CD8-positive, alpha-beta T cell (primary cell): ENCODE measurements at regions of chr1 and their contacts with region 1.

Region 1: GRCh38 chr1:117758444-117759316 is 152.8 kb downstream of the TENT5C start:
- DNase-seq: peak; percentile 38 to 81 (median 69)
- ATAC-seq: peak; percentile 87
- H3K4me3 ChIP-seq: peak overlapping the region; percentile 45 to 48
- H3K4me3 Mint-ChIP-seq: peak overlapping the region; percentile 79
- H3K27ac ChIP-seq: no peak overlapping the region
- H3K27ac Mint-ChIP-seq: no peak overlapping the region
- H3K4me1 ChIP-seq: no peaks in the 10 kb centered on the region
- H3K4me1 Mint-ChIP-seq: peaks cover 5% of the 10 kb centered on the region
- H3K27me3 ChIP-seq: no peaks in the 10 kb centered on the region
- H3K27me3 Mint-ChIP-seq: peaks cover 10% of the 10 kb centered on the region
- CTCF ChIP-seq: peak; percentile 86

Region 2: GRCh38 chr1:117121776-117122697 is 636.6 kb before region 1 on chr1:
- CTCF ChIA-PET with region 1: interaction called, 5 read pairs
- POLR2A ChIA-PET with region 1: no interaction called
- intact Hi-C with region 1: loop called in 1 of 2 experiments (anchors 10 kb)
- DNase-seq: peak; percentile 67 to 89 (median 81)
- ATAC-seq: peak; percentile 84
- H3K4me3 ChIP-seq: peak overlapping the region; percentile 56 to 91
- H3K4me3 Mint-ChIP-seq: peak overlapping the region; percentile 84
- H3K27ac ChIP-seq: no peak overlapping the region
- H3K27ac Mint-ChIP-seq: no peak overlapping the region
- H3K4me1 ChIP-seq: peaks cover 10% of the 10 kb centered on the region
- H3K4me1 Mint-ChIP-seq: peaks cover 9% of the 10 kb centered on the region
- H3K27me3 ChIP-seq: peaks cover 0 to 2% of the 10 kb centered on the region in 2 experiments
- H3K27me3 Mint-ChIP-seq: peaks cover 11% of the 10 kb centered on the region
- CTCF ChIP-seq: peak; percentile 69

Region 3: DNA sequence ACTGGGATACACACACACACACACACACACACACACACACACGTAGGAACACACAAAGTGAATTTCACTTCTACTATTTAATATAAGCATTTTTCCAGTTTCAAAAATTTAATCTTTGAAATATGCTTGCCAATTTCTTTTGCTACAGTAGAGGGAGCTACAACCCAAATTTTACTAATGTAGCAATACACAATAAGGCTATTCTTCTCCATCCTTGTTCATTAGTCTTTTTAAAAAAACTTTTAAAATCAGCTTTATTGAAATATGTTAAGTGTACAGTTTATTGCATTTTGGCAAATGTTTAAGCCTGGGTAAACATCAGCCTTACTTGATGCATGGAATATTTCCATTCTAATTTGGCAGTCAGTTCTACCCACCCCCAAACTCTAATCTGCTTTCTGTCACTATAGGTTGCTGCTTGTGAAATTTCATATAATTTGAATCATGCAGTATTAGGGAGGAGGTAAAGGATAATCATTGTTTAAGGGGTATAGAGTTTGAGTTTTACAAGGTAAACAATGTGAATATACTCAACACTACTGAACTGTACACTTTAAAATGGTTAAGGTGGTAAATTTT is 245.8 kb before region 1 on chr1:
- CTCF ChIA-PET with region 1: interaction called, 148 read pairs
- POLR2A ChIA-PET with region 1: no interaction called
- intact Hi-C with region 1: loop called (anchors 1 kb)
- DNase-seq: peak in 2 of 9 experiments; percentile 35 to 46
- ATAC-seq: peak; percentile 46
- H3K4me3 ChIP-seq: no peak overlapping the region
- H3K4me3 Mint-ChIP-seq: no peak overlapping the region
- H3K27ac ChIP-seq: no peak overlapping the region
- H3K27ac Mint-ChIP-seq: no peak overlapping the region
- H3K4me1 ChIP-seq: no peaks in the 10 kb centered on the region
- H3K4me1 Mint-ChIP-seq: no peaks in the 10 kb centered on the region
- H3K27me3 ChIP-seq: no peaks in the 10 kb centered on the region
- H3K27me3 Mint-ChIP-seq: no peaks in the 10 kb centered on the region
- CTCF ChIP-seq: peak; percentile 80

Region 4: DNA sequence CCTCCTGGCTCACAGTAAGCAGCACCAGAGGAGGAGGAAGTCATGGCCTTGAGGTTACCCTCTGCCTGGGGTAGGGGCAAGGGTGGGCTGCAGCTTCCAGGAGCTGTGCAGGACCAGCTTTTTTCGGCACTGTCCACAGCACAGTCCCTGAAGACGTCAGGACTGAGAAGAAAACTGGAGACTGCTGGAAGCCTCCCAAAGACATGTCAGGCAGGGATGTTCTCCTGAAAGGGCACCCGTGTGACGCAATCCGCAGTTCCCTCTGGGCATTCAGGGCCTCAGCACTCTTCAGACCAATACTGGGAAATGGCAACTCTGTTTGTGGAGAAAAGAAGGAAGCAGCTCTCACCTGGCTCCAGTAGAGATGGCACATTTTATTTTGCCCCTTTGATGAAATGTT is 217.7 kb before region 1 on chr1:
- CTCF ChIA-PET with region 1: interaction called, 214 read pairs
- POLR2A ChIA-PET with region 1: no interaction called
- intact Hi-C with region 1: no loop called
- DNase-seq: no peak
- ATAC-seq: no peak
- H3K4me3 ChIP-seq: no peak overlapping the region
- H3K4me3 Mint-ChIP-seq: no peak overlapping the region
- H3K27ac ChIP-seq: no peak overlapping the region
- H3K27ac Mint-ChIP-seq: no peak overlapping the region
- H3K4me1 ChIP-seq: peaks cover 13% of the 10 kb centered on the region
- H3K4me1 Mint-ChIP-seq: no peaks in the 10 kb centered on the region
- H3K27me3 ChIP-seq: no peaks in the 10 kb centered on the region
- H3K27me3 Mint-ChIP-seq: no peaks in the 10 kb centered on the region
- CTCF ChIP-seq: no peak

Region 5: GRCh38 chr1:117710710-117711109 is 48.0 kb before region 1 on chr1:
- CTCF ChIA-PET with region 1: interaction called, 15 read pairs
- POLR2A ChIA-PET with region 1: no interaction called
- intact Hi-C with region 1: loop called in 1 of 2 experiments (anchors 5 kb)
- DNase-seq: peak in 1 of 9 experiments; percentile 18
- ATAC-seq: no peak
- H3K4me3 ChIP-seq: no peak overlapping the region
- H3K4me3 Mint-ChIP-seq: no peak overlapping the region
- H3K27ac ChIP-seq: no peak overlapping the region
- H3K27ac Mint-ChIP-seq: no peak overlapping the region
- H3K4me1 ChIP-seq: no peaks in the 10 kb centered on the region
- H3K4me1 Mint-ChIP-seq: no peaks in the 10 kb centered on the region
- H3K27me3 ChIP-seq: peaks cover 0 to 2% of the 10 kb centered on the region in 2 experiments
- H3K27me3 Mint-ChIP-seq: peaks cover 33% of the 10 kb centered on the region
- CTCF ChIP-seq: no peak

Region 6: GRCh38 chr1:117770981-117771531 is 12.4 kb after region 1 on chr1:
- CTCF ChIA-PET with region 1: interaction called, 29 read pairs
- POLR2A ChIA-PET with region 1: no interaction called
- intact Hi-C with region 1: no loop called
- DNase-seq: no peak
- ATAC-seq: no peak
- H3K4me3 ChIP-seq: no peak overlapping the region
- H3K4me3 Mint-ChIP-seq: no peak overlapping the region
- H3K27ac ChIP-seq: no peak overlapping the region
- H3K27ac Mint-ChIP-seq: no peak overlapping the region
- H3K4me1 ChIP-seq: no peaks in the 10 kb centered on the region
- H3K4me1 Mint-ChIP-seq: no peaks in the 10 kb centered on the region
- H3K27me3 ChIP-seq: peaks cover 0 to 3% of the 10 kb centered on the region in 2 experiments
- H3K27me3 Mint-ChIP-seq: peaks cover 27% of the 10 kb centered on the region
- CTCF ChIP-seq: no peak